Calu3 (cell line): ENCODE measurements at regions of chr6 and their contacts with region 1.

Region 1: DNA sequence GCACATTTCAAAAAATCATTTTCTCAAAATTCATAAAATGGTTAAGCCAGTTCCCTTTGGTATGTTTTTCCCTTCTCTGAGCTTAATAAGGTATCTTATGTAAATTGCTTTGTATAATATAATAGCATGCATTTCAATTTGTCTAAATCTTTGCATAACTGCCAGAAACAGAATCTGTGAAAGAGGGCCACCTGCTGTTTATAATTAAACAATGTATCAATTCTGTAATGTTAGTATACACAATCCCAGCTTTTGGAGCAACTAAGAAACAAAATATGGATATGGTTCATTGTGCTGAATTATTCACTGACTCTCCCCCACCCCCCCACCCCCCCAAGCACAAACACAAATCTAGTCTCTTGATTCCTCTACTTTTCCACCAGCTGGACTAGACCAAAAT is 54.8 kb downstream of the GPX5 start:
- DNase-seq: no peak
- H3K4me3 Mint-ChIP-seq: no peak overlapping the region
- H3K27ac Mint-ChIP-seq: no peak overlapping the region
- H3K4me1 Mint-ChIP-seq: no peaks in the 10 kb centered on the region
- H3K27me3 Mint-ChIP-seq: no peaks in the 10 kb centered on the region
- CTCF ChIP-seq: peak; percentile 16

Region 2: DNA sequence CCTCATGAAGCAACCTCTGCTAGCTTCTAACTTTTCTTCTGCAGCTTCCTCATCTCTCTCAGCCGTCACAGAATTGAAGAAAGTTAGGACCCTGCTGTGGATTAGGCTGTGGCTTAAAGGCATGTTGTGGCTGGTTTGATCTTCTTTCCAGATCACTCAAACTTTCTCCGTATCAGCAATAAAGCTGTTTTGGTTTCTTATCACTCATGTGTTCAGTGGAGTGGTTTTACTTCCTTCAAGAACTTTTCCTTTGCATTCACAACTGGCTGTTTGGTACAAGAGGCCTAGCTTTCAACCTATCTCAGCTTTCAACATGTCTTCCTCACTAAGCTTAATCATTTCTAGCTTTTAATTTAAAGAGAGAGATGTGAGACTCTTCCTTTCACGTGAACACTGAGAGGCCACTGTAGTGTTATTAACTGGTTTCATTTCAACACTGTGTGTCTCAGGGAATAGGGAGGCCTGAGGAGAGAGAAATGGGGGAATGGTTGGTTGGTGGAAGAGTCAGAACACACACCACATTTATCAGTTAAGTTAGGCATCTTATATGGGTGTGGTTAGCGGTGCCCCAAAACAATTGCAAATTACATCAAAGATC is 154.4 kb before region 1 on chr6:
- CTCF ChIA-PET with region 1: no interaction called
- intact Hi-C with region 1: no loop called
- DNase-seq: no peak
- H3K4me3 Mint-ChIP-seq: no peak overlapping the region
- H3K27ac Mint-ChIP-seq: no peak overlapping the region
- H3K4me1 Mint-ChIP-seq: no peaks in the 10 kb centered on the region
- H3K27me3 Mint-ChIP-seq: peaks cover 10% of the 10 kb centered on the region
- CTCF ChIP-seq: no peak

Region 3: GRCh38 chr6:28496099-28496779 is 84.2 kb before region 1 on chr6:
- CTCF ChIA-PET with region 1: interaction called, 22 read pairs
- intact Hi-C with region 1: loop called (anchors 1 kb)
- DNase-seq: no peak
- H3K4me3 Mint-ChIP-seq: no peak overlapping the region
- H3K27ac Mint-ChIP-seq: no peak overlapping the region
- H3K4me1 Mint-ChIP-seq: no peaks in the 10 kb centered on the region
- H3K27me3 Mint-ChIP-seq: no peaks in the 10 kb centered on the region
- CTCF ChIP-seq: no peak